Cardiac septum (tissue), 1 donor: ENCODE measurements at regions of chr12 and their contacts with region 1.

Region 1: DNA sequence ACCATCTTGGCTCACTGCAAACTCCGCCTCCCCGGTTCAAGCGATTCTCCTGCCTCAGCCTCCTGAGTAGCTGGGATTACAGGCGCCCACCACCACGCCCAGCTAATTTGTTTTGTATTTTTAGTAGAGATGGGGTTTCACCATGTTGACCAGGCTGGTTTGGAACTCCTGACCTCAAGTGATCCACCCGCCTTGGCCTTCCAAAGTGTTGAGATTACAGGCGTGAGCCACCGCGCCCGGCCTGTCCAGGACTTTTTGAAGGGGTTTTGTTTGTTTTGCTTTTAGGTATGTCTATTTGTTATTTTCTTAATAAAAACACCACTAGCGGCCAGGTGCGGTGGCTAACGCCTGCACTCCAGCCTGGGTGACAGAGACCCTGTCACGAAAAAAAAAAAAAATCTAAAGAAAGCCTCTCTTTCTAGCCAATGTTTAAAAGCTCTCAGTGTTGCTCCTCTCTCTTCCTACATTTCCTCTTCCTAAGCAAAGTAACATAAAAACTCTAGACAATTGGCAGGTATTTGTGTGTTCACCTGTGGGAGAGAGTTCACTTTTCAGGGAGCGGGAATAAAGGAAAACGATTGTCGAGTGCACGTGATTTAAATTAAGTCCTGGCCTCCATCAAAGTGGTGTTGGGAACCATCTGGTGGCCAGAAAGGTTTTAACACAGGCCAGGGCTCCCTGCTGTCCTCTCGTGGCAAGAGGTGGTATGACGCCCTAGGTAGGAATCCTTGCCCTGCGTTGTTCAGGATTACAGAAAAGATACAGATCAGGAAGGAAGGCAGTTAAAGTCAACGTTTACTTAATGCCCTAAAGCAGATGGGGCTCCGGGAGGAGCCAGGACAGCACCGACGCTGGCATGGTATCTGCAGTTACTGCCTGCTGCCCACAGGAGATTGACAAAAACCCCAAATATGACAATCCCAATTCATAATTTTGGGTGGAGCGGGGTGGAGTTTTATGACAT is 36.2 kb upstream of the ATP23 start:
- DNase-seq: peak; percentile 91

Region 2: GRCh38 chr12:57735952-57736740 is 169.0 kb before region 1 on chr12:
- intact Hi-C with region 1: no loop called
- DNase-seq: no peak

Region 3: GRCh38 chr12:57836442-57837375 is 68.4 kb before region 1 on chr12:
- intact Hi-C with region 1: loop called (anchors 1 kb)
- DNase-seq: peak; percentile 85

Region 4: GRCh38 chr12:57846577-57847319 is 58.4 kb before region 1 on chr12 and contains the start of gene CTDSP2:
- intact Hi-C with region 1: no loop called
- DNase-seq: peak; percentile 100
- total RNA-seq, gene CTDSP2: 89.2 TPM